ENCODE measurements at regions of chr1 and their contacts with region 1.

Region 1: DNA sequence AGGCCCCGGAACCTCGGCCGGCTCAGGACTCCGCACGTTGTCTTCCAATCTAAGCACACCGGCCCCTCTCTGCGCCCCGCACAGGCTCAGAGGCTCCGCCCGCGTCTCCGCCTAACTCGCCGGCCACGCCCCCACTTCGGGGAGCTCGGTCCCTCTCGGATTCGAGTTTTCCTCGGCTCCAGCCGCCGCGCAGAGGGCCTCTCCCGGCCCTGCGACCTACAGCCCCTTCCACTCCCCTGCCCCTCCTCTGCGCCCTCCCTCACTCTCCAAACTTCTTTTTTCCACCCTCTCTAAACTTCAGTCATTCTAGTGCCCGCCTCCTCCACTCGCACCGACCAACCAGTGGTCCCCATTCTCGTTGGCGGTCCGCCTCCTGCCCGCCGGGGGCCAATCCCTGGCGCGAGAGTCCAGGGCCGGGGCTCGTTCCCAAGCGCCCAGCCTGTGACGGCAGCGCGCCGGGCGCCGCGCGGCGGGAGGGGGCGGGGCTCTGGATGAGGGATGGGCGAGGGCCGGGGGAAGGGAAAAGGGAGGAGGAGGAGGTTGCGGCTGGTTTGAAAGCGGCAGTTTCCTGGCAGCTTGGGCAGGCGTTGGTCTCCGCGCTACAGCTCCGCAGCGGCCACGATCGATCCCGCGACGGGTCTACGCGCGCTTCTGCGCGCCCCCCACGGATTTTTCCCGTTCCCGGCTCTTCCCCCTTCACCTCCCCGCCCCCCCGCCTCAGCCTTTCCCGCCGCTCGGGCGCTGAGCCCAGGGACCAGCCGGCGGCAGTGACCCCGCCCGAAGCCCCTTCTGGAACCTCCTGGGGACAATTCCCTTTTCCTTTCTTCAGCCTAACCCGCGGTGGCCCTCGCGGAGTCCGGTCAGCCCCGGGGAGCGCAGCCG is at the start of gene MAGI3:
- DNase-seq: peak; percentile 98
- ATAC-seq: peak; percentile 96 to 98 (median 97)
- H3K4me3 ChIP-seq: peak within 1 kb of the TSS; percentile 78 to 98 (median 91)
- H3K27ac ChIP-seq: peak within 1 kb of the TSS; percentile 12 to 93 (median 88)
- H3K4me1 ChIP-seq: peaks cover 0 to 39% (median 21%) of the 10 kb centered on the region in 12 donors
- H3K27me3 ChIP-seq: peaks cover 0 to 5% (median 0%) of the 10 kb centered on the region in 9 donors
- CTCF ChIP-seq: peak in 1 of 12 donors; percentile 11
- POLR2A ChIP-seq: peak in 1 of 2 donors; percentile 87
- total RNA-seq, gene MAGI3: 6.0 to 10.0 (median 8.1) TPM

Region 2: DNA sequence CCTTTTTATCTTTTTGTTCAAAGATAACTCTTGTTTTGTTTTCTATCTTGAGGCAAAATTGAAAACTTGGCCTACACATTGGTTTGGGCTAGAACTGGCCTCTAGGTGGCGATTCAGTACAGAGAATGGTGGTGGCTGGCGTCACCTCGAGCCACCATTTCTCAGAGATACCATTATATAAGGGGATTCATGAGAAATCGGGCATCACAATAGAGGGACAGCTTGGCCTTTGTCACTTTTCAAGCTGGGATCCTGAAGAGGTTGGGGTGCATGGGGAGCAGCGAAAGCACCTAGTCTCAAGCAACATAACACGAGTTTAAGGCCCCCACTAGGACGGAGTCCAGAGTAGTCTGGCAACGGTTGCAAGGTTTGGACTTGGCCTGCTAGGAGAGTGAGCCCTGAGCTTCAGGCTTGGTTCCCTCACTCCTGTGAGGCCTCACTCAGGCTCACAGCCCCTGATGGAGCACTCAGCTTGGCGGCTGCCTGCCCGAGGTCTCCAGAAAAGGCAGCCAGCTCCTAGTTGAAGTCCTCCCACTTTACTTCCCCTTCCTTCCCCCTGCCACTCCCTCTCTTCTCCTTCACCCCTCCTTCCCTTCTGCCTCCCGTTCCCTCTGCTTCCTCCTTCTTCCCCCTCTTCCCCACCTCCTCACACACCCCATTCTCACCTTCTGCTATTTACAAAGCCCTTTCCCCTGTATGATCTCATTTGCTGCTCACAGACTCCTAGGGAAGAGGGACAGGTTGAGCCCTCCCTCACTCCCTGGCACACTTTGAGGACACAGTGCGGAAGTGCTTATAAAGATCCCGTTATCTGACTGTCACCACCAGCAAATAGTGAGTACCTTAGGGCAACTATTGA is 249.4 kb before region 1 on chr1:
- intact Hi-C with region 1: loop called in 7 of 10 experiments (anchors 2 to 10 kb)
- DNase-seq: peak in 4 of 5 donors; percentile 41 to 65 (median 56)
- ATAC-seq: peak; percentile 76 to 92 (median 90)
- H3K4me3 ChIP-seq: peak overlapping the region in 5 of 12 donors; percentile 11 to 42 (median 20)
- H3K27ac ChIP-seq: peak overlapping the region in 5 of 12 donors; percentile 2 to 61 (median 48)
- H3K4me1 ChIP-seq: peaks cover 0 to 33% (median 25%) of the 10 kb centered on the region in 12 donors
- H3K27me3 ChIP-seq: no peaks in the 10 kb centered on the region
- CTCF ChIP-seq: peak; percentile 65 to 91 (median 82)
- POLR2A ChIP-seq: no peak

Region 3: DNA sequence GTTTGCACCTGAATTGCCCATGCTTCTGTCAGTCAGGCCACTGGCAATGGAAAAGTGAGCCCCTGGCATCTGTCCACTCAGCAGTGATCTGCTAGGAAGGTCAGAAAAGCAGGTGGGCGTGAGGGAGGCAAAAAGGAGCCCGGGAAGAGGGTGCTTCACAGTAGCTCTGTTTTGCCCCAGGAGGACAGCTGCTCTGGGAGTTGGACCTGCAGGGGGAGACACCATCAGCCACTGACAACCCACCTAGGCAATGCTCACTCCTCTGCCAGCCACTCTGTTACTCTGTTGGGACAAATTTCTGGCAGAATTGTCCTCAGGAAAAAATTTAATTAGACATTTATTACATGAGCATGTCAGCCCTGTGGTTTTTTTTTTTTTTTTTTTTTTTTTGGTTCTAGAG is 170.8 kb before region 1 on chr1:
- intact Hi-C with region 1: loop called in 2 of 10 experiments (anchors 10 kb)
- DNase-seq: no peak
- ATAC-seq: no peak
- H3K4me3 ChIP-seq: no peak overlapping the region
- H3K27ac ChIP-seq: no peak overlapping the region
- H3K4me1 ChIP-seq: no peaks in the 10 kb centered on the region
- H3K27me3 ChIP-seq: no peaks in the 10 kb centered on the region
- CTCF ChIP-seq: peak in 7 of 12 donors; percentile 5 to 35 (median 22)
- POLR2A ChIP-seq: no peak

Region 4: GRCh38 chr1:113226148-113226547 is 164.0 kb before region 1 on chr1:
- intact Hi-C with region 1: loop called in 1 of 10 experiments (anchors 10 kb)
- DNase-seq: peak in 1 of 5 donors; percentile 38
- ATAC-seq: peak in 3 of 4 donors; percentile 50 to 74 (median 70)
- H3K4me3 ChIP-seq: peak overlapping the region in 4 of 12 donors; percentile 11 to 33 (median 29)
- H3K27ac ChIP-seq: peak overlapping the region in 4 of 12 donors; percentile 28 to 61 (median 52)
- H3K4me1 ChIP-seq: peaks cover 0 to 6% (median 0%) of the 10 kb centered on the region in 12 donors
- H3K27me3 ChIP-seq: no peaks in the 10 kb centered on the region
- CTCF ChIP-seq: no peak
- POLR2A ChIP-seq: no peak

Region 5: GRCh38 chr1:113333056-113333455 is 57.1 kb before region 1 on chr1:
- intact Hi-C with region 1: no loop called
- DNase-seq: no peak
- ATAC-seq: no peak
- H3K4me3 ChIP-seq: no peak overlapping the region
- H3K27ac ChIP-seq: no peak overlapping the region
- H3K4me1 ChIP-seq: no peaks in the 10 kb centered on the region
- H3K27me3 ChIP-seq: no peaks in the 10 kb centered on the region
- CTCF ChIP-seq: no peak
- POLR2A ChIP-seq: no peak

Region 6: DNA sequence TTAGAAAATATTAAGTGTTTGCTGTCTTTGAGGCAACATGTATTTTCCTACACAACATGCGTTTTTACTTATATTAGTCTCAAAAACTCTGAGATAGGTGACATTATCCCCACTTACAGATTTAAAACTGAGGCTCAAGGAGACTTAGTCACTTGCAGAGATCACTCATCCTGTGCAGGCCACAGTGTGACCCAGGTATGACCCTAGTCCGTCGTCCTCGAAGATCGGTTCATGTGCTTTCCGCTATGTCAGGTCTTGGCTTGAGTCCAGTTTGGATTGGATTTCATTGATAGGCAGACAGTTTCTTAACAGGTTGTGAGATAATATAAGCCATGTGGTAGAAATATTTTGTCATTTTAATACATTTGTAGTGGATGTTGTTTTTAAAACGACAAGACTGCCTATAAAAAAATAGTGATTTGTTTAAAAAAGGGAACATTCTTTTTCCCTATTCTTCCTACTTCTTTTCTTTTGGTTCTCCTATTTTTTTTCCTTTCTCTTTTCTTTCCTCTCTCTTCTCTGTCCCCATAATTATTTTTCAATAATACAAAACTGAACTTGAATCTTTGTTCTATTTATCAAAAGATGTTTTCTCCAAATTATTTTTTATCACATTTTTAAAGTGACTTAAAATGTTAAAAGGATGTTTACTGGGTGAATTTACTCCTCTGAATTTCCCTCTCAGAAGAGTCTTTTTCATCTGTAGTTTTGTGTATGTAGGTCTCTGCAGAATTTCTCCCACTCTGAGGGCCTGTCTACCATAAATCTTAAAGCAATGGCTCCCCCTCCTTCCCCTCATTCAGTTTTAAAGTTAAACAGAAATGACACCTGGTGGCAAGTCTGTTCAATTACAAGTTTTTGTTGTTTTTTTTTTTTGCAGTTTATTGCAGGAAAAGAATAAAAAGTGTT is 287.3 kb after region 1 on chr1:
- intact Hi-C with region 1: loop called in 2 of 10 experiments (anchors 5 to 10 kb)
- DNase-seq: peak in 3 of 5 donors; percentile 16 to 39 (median 22)
- ATAC-seq: peak in 3 of 4 donors; percentile 42 to 75 (median 74)
- H3K4me3 ChIP-seq: no peak overlapping the region
- H3K27ac ChIP-seq: no peak overlapping the region
- H3K4me1 ChIP-seq: peaks cover 0 to 11% (median 7%) of the 10 kb centered on the region in 12 donors
- H3K27me3 ChIP-seq: no peaks in the 10 kb centered on the region
- CTCF ChIP-seq: peak; percentile 46 to 73 (median 64)
- POLR2A ChIP-seq: no peak

Measured in heart left ventricle (tissue), 16 donors.